WTC11 (cell line): ENCODE measurements at regions of chr2 and their contacts with region 1.

Region 1: GRCh38 chr2:238263204-238264071 is 23.6 kb upstream of the HES6 start:
- DNase-seq: peak; percentile 91
- ATAC-seq: peak; percentile 89
- H3K4me3 Mint-ChIP-seq: no peak overlapping the region
- H3K27ac Mint-ChIP-seq: peak overlapping the region; percentile 83
- H3K4me1 Mint-ChIP-seq: peaks cover 3% of the 10 kb centered on the region
- H3K27me3 Mint-ChIP-seq: no peaks in the 10 kb centered on the region
- CTCF ChIP-seq: peak; percentile 68

Region 2: DNA sequence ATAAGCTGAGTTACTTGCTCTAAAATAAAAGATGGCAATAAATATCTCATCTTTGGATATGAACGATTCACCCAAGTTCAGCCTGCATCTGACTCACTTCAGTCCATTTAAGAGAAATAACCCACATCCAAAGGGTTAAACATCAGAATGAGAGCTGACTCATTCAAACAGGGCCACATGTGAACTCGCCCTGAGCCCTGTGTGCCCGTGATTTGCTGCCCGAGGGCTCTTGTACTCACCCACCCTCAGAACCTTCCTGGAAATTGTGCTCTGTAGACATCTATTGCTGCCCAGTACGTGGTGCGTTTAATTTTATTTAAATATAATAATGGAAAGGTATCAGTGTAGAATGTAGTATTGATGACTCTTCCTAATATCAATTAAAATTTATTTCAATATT is 531.8 kb before region 1 on chr2:
- CTCF ChIA-PET with region 1: no interaction called
- POLR2A ChIA-PET with region 1: no interaction called
- DNase-seq: no peak
- ATAC-seq: no peak
- H3K4me3 Mint-ChIP-seq: no peak overlapping the region
- H3K27ac Mint-ChIP-seq: no peak overlapping the region
- H3K4me1 Mint-ChIP-seq: peaks cover 80% of the 10 kb centered on the region
- H3K27me3 Mint-ChIP-seq: no peaks in the 10 kb centered on the region
- CTCF ChIP-seq: no peak

Region 3: DNA sequence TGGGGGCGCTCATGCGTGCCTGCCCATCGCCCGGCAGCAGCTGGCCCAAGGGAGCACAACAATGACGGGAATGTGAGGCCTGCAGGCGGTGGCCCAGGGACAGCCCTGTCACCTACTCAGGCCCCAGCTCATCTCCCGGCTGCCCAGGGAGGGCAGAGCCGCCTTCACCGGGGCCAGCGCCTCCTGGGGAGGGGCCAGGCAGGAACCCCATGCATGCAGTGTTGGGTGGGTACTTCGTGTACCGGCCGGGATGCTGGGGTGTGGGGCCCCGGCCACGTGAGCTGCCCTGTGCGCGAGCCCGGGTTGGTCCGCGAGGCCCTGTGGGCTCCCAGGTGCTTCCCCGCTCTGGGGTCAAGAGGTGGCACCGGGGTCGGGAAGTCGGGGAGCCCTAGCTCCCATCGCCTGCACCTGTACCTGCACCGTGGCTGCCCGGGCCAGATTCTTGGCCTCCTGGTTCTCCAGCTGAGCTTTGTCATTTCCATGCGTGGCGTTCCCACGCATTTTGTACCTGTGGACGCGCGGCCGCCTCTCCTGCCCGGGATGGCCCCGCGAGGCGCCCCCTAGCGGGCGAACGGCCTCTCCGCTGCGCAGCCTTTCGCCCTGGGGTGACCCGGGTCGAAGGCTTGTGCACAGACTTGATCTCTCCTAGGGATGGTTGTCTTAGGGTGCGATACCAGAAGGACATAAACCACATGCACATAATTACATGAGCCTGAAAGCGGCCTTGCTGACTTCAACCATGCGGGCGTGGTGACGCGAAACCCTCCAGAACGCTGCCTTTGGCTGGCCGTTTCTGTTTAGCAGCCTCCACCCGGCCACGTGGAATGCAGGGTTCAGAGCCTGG is 124.0 kb before region 1 on chr2:
- CTCF ChIA-PET with region 1: interaction called, 10 read pairs
- POLR2A ChIA-PET with region 1: no interaction called
- DNase-seq: peak; percentile 64
- ATAC-seq: peak; percentile 64
- H3K4me3 Mint-ChIP-seq: no peak overlapping the region
- H3K27ac Mint-ChIP-seq: no peak overlapping the region
- H3K4me1 Mint-ChIP-seq: no peaks in the 10 kb centered on the region
- H3K27me3 Mint-ChIP-seq: no peaks in the 10 kb centered on the region
- CTCF ChIP-seq: peak; percentile 97

Region 4: DNA sequence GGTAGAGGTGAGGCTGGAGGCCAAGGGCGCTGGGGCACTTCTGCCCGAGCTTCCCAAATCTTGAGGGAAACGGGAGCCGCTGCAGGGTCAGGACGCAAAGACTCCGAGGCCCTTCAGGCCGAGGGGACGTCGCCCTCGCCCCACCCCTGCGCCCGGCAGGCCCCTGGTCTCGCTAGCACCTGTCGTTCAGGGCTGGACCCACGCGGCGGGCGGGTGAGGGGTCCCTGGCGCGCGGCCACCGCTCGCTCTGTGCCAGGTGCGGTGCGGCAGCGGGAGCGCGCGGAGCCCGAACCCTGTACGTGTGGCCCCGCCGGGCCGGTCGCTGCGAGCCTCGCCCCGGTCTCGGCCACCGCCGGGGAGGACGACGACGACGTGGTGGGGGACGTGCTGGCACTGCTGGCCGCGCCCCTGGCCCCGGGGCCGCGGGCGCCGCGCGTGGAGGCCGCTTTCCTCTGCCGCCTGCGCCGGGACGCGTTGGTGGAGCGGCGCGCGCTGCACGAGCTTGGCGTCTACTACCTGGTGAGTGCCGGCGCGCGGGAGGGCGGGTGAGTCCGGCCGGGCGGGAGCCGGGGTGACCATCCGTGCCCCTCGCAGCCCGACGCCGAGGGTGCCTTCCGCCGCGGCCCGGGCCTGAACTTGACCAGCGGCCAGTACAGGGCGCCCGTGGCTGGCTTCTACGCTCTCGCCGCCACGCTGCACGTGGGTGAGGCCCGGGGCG is 99.8 kb before region 1 on chr2:
- CTCF ChIA-PET with region 1: interaction called, 35 read pairs
- POLR2A ChIA-PET with region 1: no interaction called
- DNase-seq: no peak
- ATAC-seq: no peak
- H3K4me3 Mint-ChIP-seq: peak overlapping the region; percentile 33
- H3K27ac Mint-ChIP-seq: no peak overlapping the region
- H3K4me1 Mint-ChIP-seq: peaks cover 6% of the 10 kb centered on the region
- H3K27me3 Mint-ChIP-seq: peaks cover 52% of the 10 kb centered on the region
- CTCF ChIP-seq: no peak

Region 5: DNA sequence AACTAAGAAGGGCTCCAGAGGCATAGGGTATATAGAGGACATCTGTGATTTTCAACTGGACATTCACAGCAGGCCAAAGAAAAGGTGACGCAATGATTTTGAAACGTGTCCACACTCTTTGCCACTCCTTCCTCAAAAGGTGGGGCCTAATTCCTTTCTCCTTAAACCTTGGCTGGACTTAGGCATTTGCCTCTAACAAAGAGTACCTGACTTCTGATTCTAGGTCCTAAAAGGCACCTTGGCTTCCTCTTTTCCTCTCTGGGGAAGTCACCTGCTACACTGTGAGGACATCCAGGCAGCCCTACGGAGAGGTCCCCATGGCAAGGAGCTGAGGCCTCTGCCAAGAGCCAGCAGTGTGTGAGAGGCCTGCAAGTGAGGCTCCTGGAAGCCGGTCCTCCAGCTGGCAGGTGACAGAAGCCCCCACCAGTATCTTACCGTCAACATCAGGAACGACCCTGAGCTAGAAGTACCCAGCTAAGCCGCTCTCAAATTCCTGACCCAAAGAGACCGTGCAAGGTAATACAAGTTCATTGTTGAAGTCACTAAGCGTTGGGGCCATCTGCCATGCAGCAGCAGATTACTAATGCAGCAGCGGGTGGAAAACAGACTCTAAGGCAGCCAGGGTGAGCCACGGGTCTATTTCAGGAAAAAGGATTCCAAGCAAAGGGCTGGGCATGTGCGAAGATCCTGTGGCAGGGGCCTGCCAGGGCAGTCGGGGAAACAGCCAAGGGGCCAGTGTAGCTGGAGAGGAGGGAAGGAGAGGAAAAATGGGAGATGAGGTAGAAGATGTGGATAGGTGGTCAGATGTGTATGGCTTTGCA is 16.2 kb before region 1 on chr2:
- CTCF ChIA-PET with region 1: interaction called, 28 read pairs
- POLR2A ChIA-PET with region 1: no interaction called
- DNase-seq: no peak
- ATAC-seq: no peak
- H3K4me3 Mint-ChIP-seq: no peak overlapping the region
- H3K27ac Mint-ChIP-seq: no peak overlapping the region
- H3K4me1 Mint-ChIP-seq: peaks cover 13% of the 10 kb centered on the region
- H3K27me3 Mint-ChIP-seq: peaks cover 4% of the 10 kb centered on the region
- CTCF ChIP-seq: no peak

Region 6: GRCh38 chr2:238288650-238289573 is 25.5 kb after region 1 on chr2:
- CTCF ChIA-PET with region 1: interaction called, 50 read pairs
- POLR2A ChIA-PET with region 1: no interaction called
- DNase-seq: peak; percentile 99
- ATAC-seq: peak; percentile 85
- H3K4me3 Mint-ChIP-seq: peak overlapping the region; percentile 79
- H3K27ac Mint-ChIP-seq: peak overlapping the region; percentile 58; the same call in 1 of the 2 replicates
- H3K4me1 Mint-ChIP-seq: peaks cover 23% of the 10 kb centered on the region
- H3K27me3 Mint-ChIP-seq: peaks cover 4% of the 10 kb centered on the region; the same call in 1 of the 2 replicates
- CTCF ChIP-seq: no peak

Region 7: DNA sequence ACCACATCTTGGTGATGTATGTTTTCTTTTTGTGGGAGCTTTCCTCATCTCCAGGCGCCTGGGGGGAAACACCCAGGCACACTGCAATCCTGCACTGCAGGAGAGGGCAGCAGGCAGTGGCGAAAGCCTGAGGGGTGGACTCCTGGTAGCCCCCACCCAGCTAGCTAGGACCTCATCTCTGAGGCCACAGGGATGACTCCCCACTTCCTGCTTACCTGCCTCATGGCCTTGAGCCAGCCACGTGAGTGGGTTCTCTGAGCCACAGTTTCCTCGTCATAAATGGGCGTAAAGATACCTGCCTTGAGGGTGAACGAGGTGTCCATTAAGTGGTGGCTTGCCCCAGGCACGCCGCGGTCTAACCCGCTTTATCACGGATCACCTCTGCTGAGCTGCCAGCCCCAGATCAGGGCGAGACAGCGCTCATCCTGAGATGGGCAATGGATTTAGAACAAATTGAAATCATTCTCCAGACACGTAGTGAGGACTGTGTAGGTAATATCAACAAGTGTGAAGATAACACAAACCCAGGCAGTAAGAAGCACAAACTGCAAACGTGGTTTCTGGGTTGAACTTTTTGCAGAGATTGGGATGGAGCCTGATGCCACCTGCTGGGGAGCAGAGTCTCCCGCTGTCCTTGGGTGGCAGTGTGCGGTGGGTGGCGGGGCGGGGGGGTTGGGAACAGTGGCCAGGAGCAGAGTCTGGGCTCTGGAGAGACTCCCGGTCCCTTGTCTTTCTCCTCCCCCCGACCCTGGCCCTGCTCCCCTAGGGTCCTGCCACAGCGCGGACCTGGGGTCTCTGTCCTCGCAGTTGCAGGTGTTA is 76.2 kb after region 1 on chr2:
- CTCF ChIA-PET with region 1: interaction called, 11 read pairs
- POLR2A ChIA-PET with region 1: no interaction called
- DNase-seq: no peak
- ATAC-seq: no peak
- H3K4me3 Mint-ChIP-seq: no peak overlapping the region
- H3K27ac Mint-ChIP-seq: 0 out of 2 replicates have a peak overlapping the region, but pooled peaks have one; percentile 28
- H3K4me1 Mint-ChIP-seq: peaks cover 3% of the 10 kb centered on the region; the same call in 1 of the 2 replicates
- H3K27me3 Mint-ChIP-seq: no peaks in the 10 kb centered on the region
- CTCF ChIP-seq: no peak